Lower leg skin (tissue), 4 donors: ENCODE measurements at regions of chr5 and their contacts with region 1.

Region 1: GRCh38 chr5:106639488-106639887 is 1031.2 kb downstream of the EFNA5 start:
- DNase-seq: no peak
- H3K4me3 ChIP-seq: no peak overlapping the region
- CTCF ChIP-seq: no peak
- POLR2A ChIP-seq: no peak

Region 2: GRCh38 chr5:106699198-106699597 is 59.7 kb after region 1 on chr5:
- intact Hi-C with region 1: loop called (anchors 2 kb)
- DNase-seq: no peak
- H3K4me3 ChIP-seq: no peak overlapping the region
- CTCF ChIP-seq: no peak
- POLR2A ChIP-seq: no peak